ENCODE measurements at regions of chr17 and their contacts with region 1.

Region 1: DNA sequence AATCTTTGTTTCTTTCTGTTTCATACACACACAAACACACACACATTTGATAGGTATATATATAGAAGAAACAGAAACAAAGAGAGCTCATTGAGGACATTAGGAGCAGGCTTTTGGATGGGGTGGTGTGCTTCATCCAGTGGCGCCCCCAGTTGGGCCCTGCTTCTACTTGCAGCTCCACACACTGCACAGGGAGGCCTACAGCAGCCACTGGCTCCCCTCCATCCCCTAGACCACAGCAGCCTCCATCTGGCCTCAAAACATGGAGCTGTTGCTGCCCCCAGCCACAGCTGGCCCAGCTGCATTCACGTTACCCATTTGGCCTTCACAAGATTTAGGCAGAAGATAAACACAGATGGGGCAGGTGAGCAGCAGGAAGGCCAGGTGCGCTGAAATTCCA is 33.1 kb upstream of the NF1 start:
- DNase-seq: peak in 1 of 2 experiments; percentile 57
- H3K4me3 ChIP-seq: no peak overlapping the region
- H3K27ac ChIP-seq: no peak overlapping the region
- H3K4me1 ChIP-seq: no peaks in the 10 kb centered on the region
- H3K27me3 ChIP-seq: no peaks in the 10 kb centered on the region
- CTCF ChIP-seq: peak; percentile 59 to 64 (median 59)
- EP300 ChIP-seq: no peak
- POLR2A ChIP-seq: no peak
- RAD21 ChIP-seq: peak; percentile 45 to 55

Region 2: DNA sequence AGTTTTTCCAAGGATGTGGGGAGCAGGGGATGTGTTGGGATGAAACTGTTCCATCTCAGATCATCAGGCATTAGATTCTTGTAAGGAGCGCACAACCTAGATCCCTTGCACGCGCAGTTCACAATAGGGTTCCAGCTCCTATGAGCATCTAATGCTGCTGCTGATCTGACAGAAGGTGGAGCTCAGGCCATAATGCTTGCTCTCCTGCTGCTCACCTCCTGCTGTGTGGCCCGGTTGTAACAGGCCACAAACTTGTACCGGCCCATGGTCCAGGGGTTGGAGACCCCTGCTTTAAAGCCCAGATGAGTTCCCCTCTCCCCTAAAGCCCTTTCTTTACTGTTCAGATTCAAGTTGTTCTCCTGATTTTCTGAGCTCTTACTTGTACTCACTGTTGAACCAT is 46.0 kb before region 1 on chr17:
- CTCF ChIA-PET with region 1: interaction called, 10 read pairs
- POLR2A ChIA-PET with region 1: no interaction called
- DNase-seq: no peak
- H3K4me3 ChIP-seq: no peak overlapping the region
- H3K27ac ChIP-seq: no peak overlapping the region
- H3K4me1 ChIP-seq: peaks cover 0 to 2% (median 0%) of the 10 kb centered on the region in 4 experiments; a peak in 1 of 7 replicates
- H3K27me3 ChIP-seq: no peaks in the 10 kb centered on the region
- CTCF ChIP-seq: no peak
- EP300 ChIP-seq: no peak
- POLR2A ChIP-seq: no peak
- RAD21 ChIP-seq: no peak

Region 3: GRCh38 chr17:31202968-31203367 is 141.3 kb after region 1 on chr17:
- CTCF ChIA-PET with region 1: no interaction called
- POLR2A ChIA-PET with region 1: no interaction called
- DNase-seq: no peak
- H3K4me3 ChIP-seq: no peak overlapping the region
- H3K27ac ChIP-seq: no peak overlapping the region
- H3K4me1 ChIP-seq: no peaks in the 10 kb centered on the region
- H3K27me3 ChIP-seq: no peaks in the 10 kb centered on the region
- CTCF ChIP-seq: no peak
- EP300 ChIP-seq: no peak
- POLR2A ChIP-seq: no peak
- RAD21 ChIP-seq: no peak

Region 4: DNA sequence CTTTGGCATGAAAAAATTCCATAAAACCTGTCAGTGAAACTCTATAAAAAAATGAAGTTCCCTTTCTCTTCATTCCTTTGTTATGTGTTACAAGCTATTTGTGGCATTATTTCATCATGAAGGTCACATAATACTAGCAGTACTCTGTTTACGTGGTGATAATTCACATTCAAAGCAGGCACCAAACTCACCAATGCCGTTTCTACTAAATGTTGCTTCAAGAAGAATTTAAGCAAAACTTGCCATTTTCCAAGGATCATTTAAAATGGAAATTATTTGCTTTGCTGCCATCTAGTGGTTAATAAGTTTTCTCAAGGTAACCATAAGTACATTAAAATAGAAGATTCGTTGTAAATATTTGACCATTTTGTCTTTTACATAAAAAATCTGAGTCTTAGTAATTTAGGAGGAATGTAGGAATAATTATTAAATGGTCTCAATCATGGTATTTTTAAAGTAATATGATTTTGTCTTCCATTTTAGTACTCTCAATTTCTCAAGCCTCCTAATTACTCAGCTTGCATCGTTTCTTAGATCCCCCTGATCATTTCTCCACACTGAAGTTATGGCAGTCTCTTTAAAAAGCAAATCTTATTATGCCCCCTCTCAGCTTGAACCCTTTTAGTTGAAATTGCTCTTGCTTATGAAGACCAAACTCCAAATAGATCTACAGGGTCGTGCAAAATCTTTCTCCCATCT is 154.5 kb after region 1 on chr17:
- CTCF ChIA-PET with region 1: interaction called, 12 read pairs
- POLR2A ChIA-PET with region 1: no interaction called
- DNase-seq: no peak
- H3K4me3 ChIP-seq: no peak overlapping the region
- H3K27ac ChIP-seq: no peak overlapping the region
- H3K4me1 ChIP-seq: no peaks in the 10 kb centered on the region
- H3K27me3 ChIP-seq: no peaks in the 10 kb centered on the region
- CTCF ChIP-seq: peak in 2 of 3 experiments; percentile 10 to 33; a peak in 2 of 4 replicates
- EP300 ChIP-seq: no peak
- POLR2A ChIP-seq: no peak
- RAD21 ChIP-seq: peak; percentile 42 to 53

Measured in H1 (cell line).